H1 (cell line): ENCODE measurements at regions of chr3 and their contacts with region 1.

Region 1: DNA sequence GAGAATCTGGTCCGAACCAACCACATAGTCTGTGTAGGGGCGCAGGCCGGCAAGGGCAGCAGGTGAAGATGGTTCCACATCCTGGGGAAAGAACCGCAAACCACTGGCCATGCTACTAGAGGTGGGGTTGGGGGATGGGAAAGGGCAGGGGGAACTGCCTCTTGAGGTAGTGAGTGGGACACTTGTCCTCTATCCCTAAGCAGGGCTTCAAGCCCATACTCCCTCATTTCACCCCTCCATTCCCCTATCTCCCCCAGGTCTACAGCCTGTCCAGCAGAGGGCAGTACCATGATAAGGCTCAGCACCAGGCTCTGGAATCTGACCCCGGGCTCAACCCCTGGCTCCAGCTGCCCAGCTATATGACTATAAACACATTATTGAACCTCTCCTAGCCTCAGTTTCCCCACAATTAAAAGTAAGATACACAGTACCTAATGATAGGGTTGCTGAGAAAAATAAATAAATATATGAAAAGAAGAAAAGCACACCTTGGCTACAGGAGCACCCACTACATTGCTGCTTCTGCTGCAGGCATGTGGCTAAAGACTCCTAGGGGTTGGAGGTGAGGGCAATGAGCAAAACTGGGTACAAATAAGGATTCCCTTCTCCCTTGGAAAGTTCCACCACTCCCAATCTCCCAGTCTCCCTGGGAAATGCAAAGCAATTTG is 6.3 kb downstream of the GORASP1 start:
- DNase-seq: peak in 1 of 2 experiments; percentile 58
- H3K4me3 ChIP-seq: no peak overlapping the region
- H3K27ac ChIP-seq: no peak overlapping the region
- H3K4me1 ChIP-seq: no peaks in the 10 kb centered on the region; a peak in 2 of 7 replicates
- H3K27me3 ChIP-seq: peaks cover 0 to 1% (median 0%) of the 10 kb centered on the region in 4 experiments; a peak in 1 of 7 replicates
- CTCF ChIP-seq: peak; percentile 80 to 94 (median 86)
- EP300 ChIP-seq: no peak
- POLR2A ChIP-seq: no peak
- RAD21 ChIP-seq: peak; percentile 70 to 77

Region 2: GRCh38 chr3:39216176-39216790 is 115.1 kb after region 1 on chr3:
- CTCF ChIA-PET with region 1: no interaction called
- POLR2A ChIA-PET with region 1: no interaction called
- DNase-seq: no peak
- H3K4me3 ChIP-seq: no peak overlapping the region
- H3K27ac ChIP-seq: no peak overlapping the region
- H3K4me1 ChIP-seq: peaks cover 0 to 5% (median 4%) of the 10 kb centered on the region in 4 experiments; a peak in 4 of 7 replicates
- H3K27me3 ChIP-seq: no peaks in the 10 kb centered on the region; a peak in 1 of 7 replicates
- CTCF ChIP-seq: no peak
- EP300 ChIP-seq: no peak
- POLR2A ChIP-seq: no peak
- RAD21 ChIP-seq: no peak

Region 3: GRCh38 chr3:39279745-39280517 is 178.8 kb after region 1 on chr3 and contains the start of gene CX3CR1:
- CTCF ChIA-PET with region 1: interaction called, 10 read pairs
- POLR2A ChIA-PET with region 1: no interaction called
- DNase-seq: no peak
- H3K4me3 ChIP-seq: no peak within 1 kb of the TSS
- H3K27ac ChIP-seq: no peak within 1 kb of the TSS
- H3K4me1 ChIP-seq: peaks cover 0 to 3% (median 0%) of the 10 kb centered on the region in 4 experiments; a peak in 1 of 7 replicates
- H3K27me3 ChIP-seq: no peaks in the 10 kb centered on the region
- CTCF ChIP-seq: no peak
- EP300 ChIP-seq: no peak
- POLR2A ChIP-seq: no peak
- RAD21 ChIP-seq: no peak
- total RNA-seq, gene CX3CR1: not detected in 2 replicates